CD8-positive, alpha-beta T cell (primary cell): ENCODE measurements at regions of chr20 and their contacts with region 1.

Region 1: GRCh38 chr20:4656491-4656890 is 65.2 kb upstream of the PRND start:
- DNase-seq: no peak
- ATAC-seq: no peak
- H3K4me3 ChIP-seq: no peak overlapping the region
- H3K4me3 Mint-ChIP-seq: no peak overlapping the region
- H3K27ac ChIP-seq: no peak overlapping the region
- H3K27ac Mint-ChIP-seq: no peak overlapping the region
- H3K4me1 ChIP-seq: no peaks in the 10 kb centered on the region
- H3K4me1 Mint-ChIP-seq: peaks cover 4% of the 10 kb centered on the region
- H3K27me3 ChIP-seq: peaks cover 0 to 3% of the 10 kb centered on the region in 2 experiments
- H3K27me3 Mint-ChIP-seq: peaks cover 16% of the 10 kb centered on the region
- CTCF ChIP-seq: no peak

Region 2: DNA sequence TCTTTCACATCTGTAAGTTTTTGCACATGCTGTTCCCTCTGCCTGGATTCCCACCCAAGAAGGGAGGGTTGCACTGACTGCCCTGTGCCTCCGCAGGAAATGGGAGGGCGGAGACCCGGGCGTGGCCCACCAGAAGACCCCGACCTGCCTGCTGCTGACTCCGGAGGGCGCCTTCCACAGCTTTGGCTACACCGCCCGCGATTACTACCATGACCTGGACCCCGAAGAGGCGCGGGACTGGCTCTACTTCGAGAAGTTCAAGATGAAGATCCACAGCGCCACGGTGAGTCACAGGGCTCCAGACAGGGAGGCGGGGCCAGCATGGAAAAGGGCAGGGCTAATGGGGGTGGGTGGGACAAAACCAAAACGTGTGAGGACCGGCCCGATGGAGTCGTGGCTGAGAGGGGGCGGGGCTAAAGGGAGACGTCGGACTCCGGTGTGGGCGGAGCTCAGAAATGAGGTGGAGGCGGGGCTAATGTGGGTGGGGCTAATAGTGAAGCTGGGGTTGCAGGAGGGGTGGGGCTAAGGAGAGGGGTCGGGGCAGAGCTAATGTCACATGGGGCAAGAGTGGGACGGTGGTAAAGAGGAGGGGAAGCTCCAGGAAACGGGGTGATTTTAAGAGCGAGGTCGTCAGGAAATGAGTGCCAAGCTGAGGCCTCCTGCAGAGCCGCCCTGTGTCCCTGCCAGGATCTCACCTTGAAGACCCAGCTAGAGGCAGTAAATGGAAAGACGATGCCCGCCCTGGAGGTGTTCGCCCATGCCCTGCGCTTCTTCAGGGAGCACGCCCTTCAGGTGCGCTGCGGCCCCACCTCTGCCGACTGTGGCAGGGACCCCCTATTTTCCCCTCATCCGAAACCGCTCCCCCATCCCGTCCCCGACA is 911.4 kb before region 1 on chr20:
- CTCF ChIA-PET with region 1: no interaction called
- POLR2A ChIA-PET with region 1: no interaction called
- intact Hi-C with region 1: no loop called
- DNase-seq: peak; percentile 29 to 82 (median 67)
- ATAC-seq: peak; percentile 84
- H3K4me3 ChIP-seq: peak overlapping the region in 1 of 2 experiments; percentile 16
- H3K4me3 Mint-ChIP-seq: peak overlapping the region; percentile 71
- H3K27ac ChIP-seq: no peak overlapping the region
- H3K27ac Mint-ChIP-seq: peak overlapping the region; percentile 39
- H3K4me1 ChIP-seq: peaks cover 9% of the 10 kb centered on the region
- H3K4me1 Mint-ChIP-seq: peaks cover 12% of the 10 kb centered on the region
- H3K27me3 ChIP-seq: no peaks in the 10 kb centered on the region
- H3K27me3 Mint-ChIP-seq: peaks cover 5% of the 10 kb centered on the region
- CTCF ChIP-seq: no peak

Region 3: GRCh38 chr20:4697189-4697833 is 40.8 kb after region 1 on chr20:
- CTCF ChIA-PET with region 1: no interaction called
- POLR2A ChIA-PET with region 1: interaction called, 4 read pairs
- intact Hi-C with region 1: loop called in 1 of 2 experiments (anchors 5 kb)
- DNase-seq: no peak
- ATAC-seq: no peak
- H3K4me3 ChIP-seq: no peak overlapping the region
- H3K4me3 Mint-ChIP-seq: no peak overlapping the region
- H3K27ac ChIP-seq: no peak overlapping the region
- H3K27ac Mint-ChIP-seq: peak overlapping the region; percentile 29
- H3K4me1 ChIP-seq: no peaks in the 10 kb centered on the region
- H3K4me1 Mint-ChIP-seq: peaks cover 37% of the 10 kb centered on the region
- H3K27me3 ChIP-seq: no peaks in the 10 kb centered on the region
- H3K27me3 Mint-ChIP-seq: no peaks in the 10 kb centered on the region
- CTCF ChIP-seq: no peak